Vagina (tissue), 2 donors: ENCODE measurements at regions of chr18 and their contacts with region 1.

Region 1: GRCh38 chr18:32092422-32093101 is 888 bp downstream of the RNF138 start:
- DNase-seq: peak; percentile 98 to 99
- H3K4me3 ChIP-seq: peak overlapping the region; percentile 58 to 65
- H3K27ac ChIP-seq: peak overlapping the region; percentile 98
- H3K4me1 ChIP-seq: peaks cover 48% of the 10 kb centered on the region
- H3K27me3 ChIP-seq: no peaks in the 10 kb centered on the region
- CTCF ChIP-seq: no peak
- POLR2A ChIP-seq: peak in 1 of 2 donors; percentile 34

Region 2: DNA sequence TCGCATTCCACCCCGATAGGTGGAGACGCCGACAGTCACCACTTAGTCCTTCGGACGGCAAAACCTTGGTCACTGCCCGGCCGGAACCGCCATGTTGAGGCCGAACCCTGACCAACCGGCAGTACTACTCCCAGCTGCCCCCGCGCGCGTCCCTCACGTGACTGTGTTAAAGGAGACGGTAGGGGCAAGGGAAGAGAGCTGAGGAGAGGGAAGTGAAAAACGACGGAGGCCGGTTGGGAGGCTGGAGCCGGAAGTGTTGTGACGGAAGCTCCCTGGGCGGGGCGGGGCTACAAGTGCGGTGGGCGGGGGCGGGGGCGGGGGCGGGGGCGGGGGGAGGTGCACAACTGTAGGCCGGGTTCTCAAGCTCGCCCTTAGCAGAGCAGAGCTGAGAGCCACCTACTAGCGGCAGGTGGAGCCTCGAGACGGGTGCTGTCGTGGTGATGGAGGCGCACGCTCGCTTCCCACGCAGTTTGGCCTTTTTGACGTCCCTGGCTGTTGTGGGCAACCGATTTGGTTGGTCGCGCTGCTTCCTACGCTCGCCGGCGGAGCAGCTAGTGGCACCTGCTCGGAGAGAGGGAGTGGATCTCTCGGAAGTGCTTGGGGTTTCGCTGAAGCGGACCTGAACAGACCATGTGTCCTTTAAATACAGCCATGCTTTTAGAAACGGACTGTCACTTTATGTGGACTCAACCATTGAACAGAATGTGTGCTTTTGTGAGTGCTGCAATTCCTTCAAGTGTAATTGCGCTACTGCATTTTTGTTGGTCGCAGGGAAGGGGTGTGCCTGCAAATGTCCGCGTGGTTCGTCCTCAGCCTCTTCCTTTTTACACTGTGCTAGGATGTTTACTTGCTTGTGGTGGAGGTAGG is 149.3 kb before region 1 on chr18 and contains the start of gene TRAPPC8:
- intact Hi-C with region 1: loop called (anchors 5 kb)
- DNase-seq: peak; percentile 99
- H3K4me3 ChIP-seq: peak within 1 kb of the TSS; percentile 89 to 93
- H3K27ac ChIP-seq: peak within 1 kb of the TSS; percentile 93
- H3K4me1 ChIP-seq: peaks cover 42% of the 10 kb centered on the region
- H3K27me3 ChIP-seq: no peaks in the 10 kb centered on the region
- CTCF ChIP-seq: no peak
- POLR2A ChIP-seq: peak in 1 of 2 donors; percentile 24
- total RNA-seq, gene TRAPPC8: 33.1 TPM

Region 3: GRCh38 chr18:31990823-31991222 is 101.7 kb before region 1 on chr18:
- intact Hi-C with region 1: no loop called
- DNase-seq: no peak
- H3K4me3 ChIP-seq: no peak overlapping the region
- H3K27ac ChIP-seq: no peak overlapping the region
- H3K4me1 ChIP-seq: no peaks in the 10 kb centered on the region
- H3K27me3 ChIP-seq: no peaks in the 10 kb centered on the region
- CTCF ChIP-seq: no peak
- POLR2A ChIP-seq: no peak

Region 4: DNA sequence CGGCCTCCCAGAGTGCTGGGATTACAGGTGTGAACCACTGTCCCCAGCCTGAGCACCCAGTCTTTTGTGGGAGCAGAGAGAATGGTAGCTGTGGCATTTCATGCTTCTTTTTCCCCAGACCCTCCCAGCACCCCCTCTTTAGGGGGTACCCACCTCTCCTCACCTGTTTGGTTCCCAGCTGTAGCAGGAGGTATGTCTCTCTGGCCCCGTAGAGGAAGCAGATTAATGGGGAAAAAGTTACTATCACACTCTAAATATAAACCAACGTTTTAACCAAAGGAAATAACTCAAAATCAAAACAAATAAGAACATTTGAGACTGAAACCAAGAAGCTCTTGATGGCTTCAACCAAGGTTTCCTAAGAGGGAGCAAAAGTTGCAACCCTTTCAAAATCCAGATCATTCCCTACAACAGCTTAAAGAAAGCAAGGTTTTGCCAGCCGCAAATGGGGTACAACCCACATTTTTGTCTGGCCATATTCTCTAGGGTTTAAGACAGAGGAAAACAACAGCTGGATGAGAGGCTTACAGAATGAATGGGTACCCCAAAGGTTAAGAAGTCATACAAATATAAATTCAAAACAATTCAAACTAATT is 66.0 kb before region 1 on chr18:
- intact Hi-C with region 1: no loop called
- DNase-seq: no peak
- H3K4me3 ChIP-seq: no peak overlapping the region
- H3K27ac ChIP-seq: no peak overlapping the region
- H3K4me1 ChIP-seq: no peaks in the 10 kb centered on the region
- H3K27me3 ChIP-seq: no peaks in the 10 kb centered on the region
- CTCF ChIP-seq: no peak
- POLR2A ChIP-seq: no peak

Region 5: DNA sequence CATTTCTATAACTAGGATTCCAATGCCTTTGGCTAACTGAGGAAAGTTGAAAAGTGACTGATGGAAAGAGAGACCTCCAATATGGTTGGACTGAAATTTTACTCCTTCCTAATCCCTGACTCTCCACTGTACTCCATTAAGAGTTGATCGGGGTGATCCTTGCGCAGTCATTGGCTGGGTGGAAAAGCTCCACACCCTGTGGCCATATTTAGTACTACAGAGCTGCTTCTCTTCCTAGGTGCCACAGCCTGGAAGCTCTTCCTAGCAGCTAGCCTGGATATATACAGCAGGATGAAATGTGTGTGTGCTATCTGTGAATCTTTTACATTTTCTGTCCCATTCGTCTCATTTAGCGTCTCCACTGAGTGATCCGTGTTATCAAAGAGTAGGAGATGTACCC is 168.4 kb after region 1 on chr18:
- intact Hi-C with region 1: no loop called
- DNase-seq: no peak
- H3K4me3 ChIP-seq: no peak overlapping the region
- H3K27ac ChIP-seq: no peak overlapping the region
- H3K4me1 ChIP-seq: no peaks in the 10 kb centered on the region
- H3K27me3 ChIP-seq: no peaks in the 10 kb centered on the region
- CTCF ChIP-seq: no peak
- POLR2A ChIP-seq: no peak

Region 6: DNA sequence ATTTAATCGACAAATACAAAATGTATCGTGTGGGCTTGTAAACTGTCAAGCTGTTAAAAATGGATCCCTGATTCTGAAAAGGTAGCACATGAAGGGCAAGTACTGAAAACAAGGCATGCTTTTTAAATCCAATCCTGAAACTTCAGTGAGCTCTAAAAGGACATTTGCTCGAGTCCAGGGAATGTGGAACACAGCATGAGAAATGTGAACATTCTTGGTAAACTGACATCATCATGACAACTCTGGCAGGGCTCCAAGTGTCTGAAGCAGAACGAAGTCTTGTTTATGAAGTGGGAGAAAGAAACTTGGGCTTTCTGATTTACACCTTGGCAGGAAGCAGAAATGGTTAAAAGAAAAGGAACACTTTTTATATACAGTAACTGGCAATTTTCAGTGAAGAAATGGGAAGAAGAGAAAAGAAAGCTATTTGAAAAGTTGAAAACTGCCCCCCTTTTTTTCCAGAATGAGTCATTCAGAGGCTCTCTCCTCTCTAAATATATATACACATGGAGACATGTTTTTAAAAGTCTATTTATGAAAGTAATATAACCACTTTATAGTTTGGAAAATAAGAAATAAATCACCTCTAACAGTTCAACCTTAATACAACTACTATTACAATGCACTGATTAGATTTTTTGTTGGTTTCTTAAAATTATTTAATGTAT is 257.3 kb after region 1 on chr18:
- intact Hi-C with region 1: loop called (anchors 10 kb)
- DNase-seq: no peak
- H3K4me3 ChIP-seq: no peak overlapping the region
- H3K27ac ChIP-seq: peak overlapping the region; percentile 76
- H3K4me1 ChIP-seq: peaks cover 57% of the 10 kb centered on the region
- H3K27me3 ChIP-seq: no peaks in the 10 kb centered on the region
- CTCF ChIP-seq: no peak
- POLR2A ChIP-seq: no peak